Activated naive CD4-positive, alpha-beta T cell treated with anti-CD3 and anti-CD28 coated beads for 36 hours (primary cell): ENCODE measurements at regions of chr3 and their contacts with region 1.

Region 1: GRCh38 chr3:196081791-196082618 is at the start of gene TFRC:
- DNase-seq: peak; percentile 96
- H3K4me3 Mint-ChIP-seq: peak within 1 kb of the TSS; percentile 97
- H3K27ac Mint-ChIP-seq: peak within 1 kb of the TSS; percentile 93
- H3K4me1 Mint-ChIP-seq: peaks cover 36% of the 10 kb centered on the region
- H3K27me3 Mint-ChIP-seq: no peaks in the 10 kb centered on the region
- total RNA-seq, gene TFRC: 436 to 442 TPM

Region 2: DNA sequence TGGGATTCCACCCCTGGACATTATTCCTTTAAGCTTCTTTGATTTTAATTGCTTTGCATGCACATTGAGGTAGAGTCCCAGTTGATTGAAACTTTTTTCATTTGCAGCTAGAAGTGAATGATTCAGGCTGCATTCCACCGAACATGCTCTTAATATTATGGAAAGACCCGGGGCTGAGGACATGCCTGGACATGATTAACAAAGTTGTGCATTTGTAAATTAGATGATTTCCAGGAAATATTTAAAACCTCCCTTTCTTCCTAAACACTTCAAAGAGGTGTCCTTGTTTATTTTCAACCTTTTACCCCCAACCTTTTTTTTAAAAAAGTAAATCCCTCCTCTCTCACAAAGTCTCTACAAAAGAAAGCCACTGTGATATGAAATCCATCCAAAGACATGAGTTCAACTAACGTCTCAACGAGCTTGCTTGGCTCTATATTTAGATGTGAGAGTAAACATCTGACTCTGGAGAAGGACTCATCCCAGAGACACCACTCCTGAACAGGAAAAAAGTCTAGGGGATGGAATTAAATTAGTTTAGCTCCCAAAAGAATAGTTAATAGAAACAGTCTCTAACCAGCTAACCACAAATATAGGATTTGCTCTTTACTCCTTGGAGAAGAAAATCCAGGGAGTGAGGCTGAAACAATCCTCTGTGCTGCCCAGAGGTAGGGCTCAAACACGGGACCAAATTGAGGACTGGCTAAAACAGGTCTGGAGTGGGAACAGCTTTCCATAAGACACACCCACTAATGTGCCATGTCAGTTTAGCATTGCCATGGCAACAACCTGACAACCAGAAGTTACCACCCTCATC is 894.2 kb before region 1 on chr3:
- CTCF ChIA-PET with region 1: no interaction called
- intact Hi-C with region 1: no loop called
- DNase-seq: no peak
- H3K4me3 Mint-ChIP-seq: no peak overlapping the region
- H3K27ac Mint-ChIP-seq: no peak overlapping the region
- H3K4me1 Mint-ChIP-seq: peaks cover 24% of the 10 kb centered on the region
- H3K27me3 Mint-ChIP-seq: no peaks in the 10 kb centered on the region

Region 3: GRCh38 chr3:196111939-196112386 is 30.0 kb after region 1 on chr3:
- CTCF ChIA-PET with region 1: no interaction called
- intact Hi-C with region 1: loop called (anchors 1 kb)
- DNase-seq: peak; percentile 60
- H3K4me3 Mint-ChIP-seq: peak overlapping the region; percentile 63
- H3K27ac Mint-ChIP-seq: peak overlapping the region; percentile 90
- H3K4me1 Mint-ChIP-seq: peaks cover 22% of the 10 kb centered on the region
- H3K27me3 Mint-ChIP-seq: no peaks in the 10 kb centered on the region

Region 4: GRCh38 chr3:196192036-196192523 is 110.1 kb after region 1 on chr3:
- CTCF ChIA-PET with region 1: interaction called, 186 read pairs
- intact Hi-C with region 1: loop called (anchors 2 kb)
- DNase-seq: peak; percentile 82
- H3K4me3 Mint-ChIP-seq: peak overlapping the region; percentile 55
- H3K27ac Mint-ChIP-seq: peak overlapping the region; percentile 92
- H3K4me1 Mint-ChIP-seq: peaks cover 38% of the 10 kb centered on the region
- H3K27me3 Mint-ChIP-seq: no peaks in the 10 kb centered on the region